Motor neuron (in vitro differentiated cells): ENCODE measurements at regions of chr13 and their contacts with region 1.

Region 1: GRCh38 chr13:95403828-95404522 is 102.7 kb upstream of the ABCC4 start:
- ATAC-seq: peak; percentile 95 to 98 (median 97)
- H3K4me3 ChIP-seq: peak overlapping the region in 3 of 5 donors; percentile 11 to 22 (median 12)
- H3K27ac ChIP-seq: no peak overlapping the region
- H3K4me1 ChIP-seq: no peaks in the 10 kb centered on the region

Region 2: DNA sequence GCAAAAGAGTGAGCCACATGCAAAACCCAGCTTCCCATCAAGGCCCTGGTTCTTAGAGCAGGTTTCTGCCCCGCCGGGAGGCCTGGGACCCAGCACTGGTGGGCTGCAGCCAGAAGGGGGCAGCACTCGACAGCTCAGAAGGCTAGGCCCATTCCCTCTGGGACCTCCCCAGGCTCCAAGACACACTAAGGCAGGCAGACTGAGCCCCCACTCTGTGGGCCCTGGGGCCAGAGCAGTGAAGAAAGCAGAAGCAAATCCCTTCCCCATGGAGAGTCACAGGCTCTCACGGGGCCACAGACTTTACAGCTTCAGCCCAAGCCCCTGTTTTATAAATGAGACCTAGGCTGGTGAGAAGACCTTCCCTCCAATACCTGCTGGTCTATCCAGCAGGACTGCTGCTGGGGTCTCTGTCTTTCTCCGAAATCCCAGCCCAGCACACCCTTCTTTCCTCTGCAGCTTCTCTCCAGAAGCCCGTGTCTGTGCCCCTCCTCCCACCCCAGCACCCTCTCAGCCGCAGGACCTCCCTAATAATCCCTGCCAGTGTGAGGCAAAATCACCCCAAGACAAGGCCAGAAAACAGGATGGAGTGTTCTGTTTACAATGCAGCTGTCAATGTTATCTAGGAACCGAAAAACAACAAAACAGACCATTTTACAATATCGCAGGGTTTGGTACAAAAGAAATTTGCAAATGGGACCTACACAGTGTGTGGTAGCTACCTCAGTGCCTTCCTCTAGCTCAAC is 212.0 kb before region 1 on chr13:
- in situ Hi-C with region 1: loop called in 8 of 9 experiments (anchors 5 to 25 kb)
- ATAC-seq: peak; percentile 83 to 99 (median 97)
- H3K4me3 ChIP-seq: no peak overlapping the region
- H3K27ac ChIP-seq: no peak overlapping the region
- H3K4me1 ChIP-seq: no peaks in the 10 kb centered on the region